CD14-positive monocyte (primary cell): ENCODE measurements at regions of chr19 and their contacts with region 1.

Region 1: DNA sequence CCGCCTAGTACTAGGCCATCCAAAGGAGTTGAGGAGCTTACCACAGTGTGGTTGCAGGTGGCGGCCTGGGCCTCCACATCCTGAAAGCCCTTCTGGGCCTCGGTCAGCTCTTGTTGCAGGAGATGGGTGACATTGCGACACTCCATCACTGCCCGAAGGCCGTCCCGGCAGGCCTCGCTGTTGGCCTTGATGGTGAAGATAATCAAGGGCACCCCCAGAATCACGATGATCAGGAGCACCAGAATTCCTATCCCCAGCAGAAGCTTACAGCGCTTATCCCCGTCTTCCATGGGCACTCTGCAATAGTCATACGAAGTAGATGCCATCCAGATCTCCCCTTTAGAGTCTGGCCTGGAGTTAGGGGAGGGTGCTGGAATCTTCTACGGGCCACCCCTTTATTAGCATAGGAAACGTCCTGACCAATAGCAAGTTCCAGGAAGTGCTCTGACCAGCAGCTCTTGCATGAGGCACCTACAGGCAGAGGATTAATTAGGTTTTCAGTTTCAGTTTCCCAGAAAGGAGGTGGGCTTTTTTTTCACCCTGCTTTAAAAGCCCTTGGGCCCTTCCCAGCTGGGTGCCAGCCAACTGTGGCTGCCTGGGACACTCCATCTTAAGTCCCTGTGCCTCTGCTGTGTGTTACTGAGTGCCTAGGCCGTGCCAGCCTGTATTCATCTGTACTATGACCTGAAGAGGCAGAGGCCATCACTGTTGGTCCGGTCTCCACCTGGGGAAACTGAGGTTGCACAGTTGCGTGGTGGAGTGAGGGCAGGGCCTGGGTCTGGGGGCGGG is at the start of gene BST2:
- DNase-seq: peak; percentile 78 to 89 (median 88)
- H3K4me3 ChIP-seq: peak within 1 kb of the TSS; percentile 67 to 93 (median 67)
- H3K4me3 Mint-ChIP-seq: peak within 1 kb of the TSS; percentile 90 to 94
- H3K27ac ChIP-seq: peak within 1 kb of the TSS; percentile 65 to 92
- H3K27ac Mint-ChIP-seq: peak within 1 kb of the TSS; percentile 93 to 96 (median 96)
- H3K4me1 ChIP-seq: peaks cover 39 to 50% of the 10 kb centered on the region in 2 donors
- H3K4me1 Mint-ChIP-seq: peaks cover 46% of the 10 kb centered on the region
- H3K27me3 ChIP-seq: no peaks in the 10 kb centered on the region
- H3K27me3 Mint-ChIP-seq: peaks cover 0 to 1% (median 0%) of the 10 kb centered on the region in 3 donors
- CTCF ChIP-seq: no peak
- polyA plus RNA-seq, gene BST2: 225 to 284 (median 272) TPM

Region 2: DNA sequence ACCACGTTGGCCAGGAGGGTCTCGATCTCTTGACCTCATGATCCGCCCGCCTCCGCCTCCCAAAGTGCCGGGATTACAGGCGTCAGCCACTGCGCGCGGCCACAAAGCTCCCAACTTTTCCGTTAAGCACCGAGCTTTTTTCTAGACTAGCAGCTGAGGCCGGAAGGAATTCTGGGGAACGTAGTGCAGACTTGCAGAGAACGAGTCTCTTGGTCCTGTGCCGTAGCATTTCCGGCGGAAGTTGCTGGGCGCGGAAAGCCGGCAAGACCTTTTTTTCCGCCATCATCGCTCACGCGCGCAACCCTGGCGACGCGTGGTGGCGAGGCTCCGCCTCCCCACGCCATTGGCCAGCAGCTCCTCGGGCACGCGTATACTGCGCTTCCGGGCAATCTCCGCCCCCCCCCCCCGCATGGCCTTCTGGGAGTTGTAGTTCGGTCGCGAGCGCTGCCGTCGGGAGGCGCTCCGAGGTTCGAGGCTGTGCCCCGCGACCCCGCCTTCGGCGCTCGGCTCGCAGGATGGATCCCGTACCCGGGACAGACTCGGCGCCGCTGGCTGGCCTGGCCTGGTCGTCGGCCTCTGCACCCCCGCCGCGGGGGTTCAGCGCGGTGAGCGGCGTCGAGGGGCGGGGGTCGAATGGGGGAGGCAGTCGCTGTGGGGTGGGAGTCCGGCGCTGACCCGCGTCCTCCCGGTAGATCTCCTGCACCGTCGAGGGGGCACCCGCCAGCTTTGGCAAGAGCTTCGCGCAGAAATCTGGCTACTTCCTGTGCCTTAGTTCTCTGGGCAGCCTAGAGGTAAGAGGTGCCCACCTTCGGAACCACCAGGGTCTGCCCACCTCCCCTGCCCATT is 14.4 kb after region 1 on chr19 and contains the start of gene MVB12A:
- intact Hi-C with region 1: loop called (anchors 2 kb)
- DNase-seq: peak; percentile 96 to 99 (median 97)
- H3K4me3 ChIP-seq: peak within 1 kb of the TSS; percentile 65 to 83 (median 76)
- H3K4me3 Mint-ChIP-seq: peak within 1 kb of the TSS; percentile 81 to 94
- H3K27ac ChIP-seq: peak within 1 kb of the TSS; percentile 59 to 83
- H3K27ac Mint-ChIP-seq: peak within 1 kb of the TSS; percentile 83 to 97 (median 94)
- H3K4me1 ChIP-seq: peaks cover 15 to 26% of the 10 kb centered on the region in 2 donors
- H3K4me1 Mint-ChIP-seq: peaks cover 23% of the 10 kb centered on the region
- H3K27me3 ChIP-seq: no peaks in the 10 kb centered on the region
- H3K27me3 Mint-ChIP-seq: peaks cover 0 to 2% (median 0%) of the 10 kb centered on the region in 3 donors
- CTCF ChIP-seq: no peak
- polyA plus RNA-seq, gene MVB12A: 43.2 to 47.8 (median 43.7) TPM

Region 3: GRCh38 chr19:17468302-17469091 is 63.1 kb after region 1 on chr19:
- intact Hi-C with region 1: no loop called
- DNase-seq: no peak
- H3K4me3 ChIP-seq: peak overlapping the region in 1 of 3 experiments; percentile 90
- H3K4me3 Mint-ChIP-seq: peak overlapping the region in 1 of 2 donors; percentile 99
- H3K27ac ChIP-seq: no peak overlapping the region
- H3K27ac Mint-ChIP-seq: peak overlapping the region in 2 of 7 donors; percentile 42 to 99
- H3K4me1 ChIP-seq: peaks cover 44 to 55% of the 10 kb centered on the region in 2 donors
- H3K4me1 Mint-ChIP-seq: peaks cover 54% of the 10 kb centered on the region
- H3K27me3 ChIP-seq: no peaks in the 10 kb centered on the region
- H3K27me3 Mint-ChIP-seq: peaks cover 2 to 5% (median 3%) of the 10 kb centered on the region in 3 donors
- CTCF ChIP-seq: no peak